ENCODE measurements at regions of chr19 and their contacts with region 1.

Region 1: GRCh38 chr19:57435062-57435978 is at the start of gene ZNF749:
- DNase-seq: peak; percentile 96
- H3K4me3 Mint-ChIP-seq: peak within 1 kb of the TSS; percentile 98
- H3K27ac Mint-ChIP-seq: peak within 1 kb of the TSS; percentile 96
- H3K4me1 Mint-ChIP-seq: peaks cover 16% of the 10 kb centered on the region
- H3K27me3 Mint-ChIP-seq: no peaks in the 10 kb centered on the region
- total RNA-seq, gene ZNF749: 21.0 and 21.5 TPM in 2 replicates

Region 2: GRCh38 chr19:57410877-57411671 is 24.2 kb before region 1 on chr19 and contains the start of gene ZNF17:
- intact Hi-C with region 1: loop called (anchors 1 kb)
- DNase-seq: peak; percentile 88
- H3K4me3 Mint-ChIP-seq: peak within 1 kb of the TSS; percentile 92
- H3K27ac Mint-ChIP-seq: peak within 1 kb of the TSS; percentile 63
- H3K4me1 Mint-ChIP-seq: peaks cover 11% of the 10 kb centered on the region
- H3K27me3 Mint-ChIP-seq: no peaks in the 10 kb centered on the region
- total RNA-seq, gene ZNF17: 7.7 and 9.3 TPM in 2 replicates

Region 3: GRCh38 chr19:57613941-57614743 is 178.8 kb after region 1 on chr19 and contains the start of gene ZNF134:
- intact Hi-C with region 1: loop called (anchors 1 kb)
- DNase-seq: peak; percentile 84
- H3K4me3 Mint-ChIP-seq: peak within 1 kb of the TSS; percentile 92
- H3K27ac Mint-ChIP-seq: peak within 1 kb of the TSS; percentile 61
- H3K4me1 Mint-ChIP-seq: peaks cover 9% of the 10 kb centered on the region
- H3K27me3 Mint-ChIP-seq: no peaks in the 10 kb centered on the region
- total RNA-seq, gene ZNF134: 7.9 and 8.5 TPM in 2 replicates

Measured in activated T-helper 2 cell treated with anti-CD3 and anti-CD28 coated beads, Interferon-gamma antibody, Interleukin-2, Interleukin-4, amounts not matched to agents 10 μg/mL and 5 μg/mL and 100 μg/mL, durations not matched to agents 14 hours and 24 hours and 36 hours (primary cell).